Activated B cell treated with CpG ODN at 0.5 μM for 24 hours (primary cell): ENCODE measurements at regions of chr6 and their contacts with region 1.

Region 1: DNA sequence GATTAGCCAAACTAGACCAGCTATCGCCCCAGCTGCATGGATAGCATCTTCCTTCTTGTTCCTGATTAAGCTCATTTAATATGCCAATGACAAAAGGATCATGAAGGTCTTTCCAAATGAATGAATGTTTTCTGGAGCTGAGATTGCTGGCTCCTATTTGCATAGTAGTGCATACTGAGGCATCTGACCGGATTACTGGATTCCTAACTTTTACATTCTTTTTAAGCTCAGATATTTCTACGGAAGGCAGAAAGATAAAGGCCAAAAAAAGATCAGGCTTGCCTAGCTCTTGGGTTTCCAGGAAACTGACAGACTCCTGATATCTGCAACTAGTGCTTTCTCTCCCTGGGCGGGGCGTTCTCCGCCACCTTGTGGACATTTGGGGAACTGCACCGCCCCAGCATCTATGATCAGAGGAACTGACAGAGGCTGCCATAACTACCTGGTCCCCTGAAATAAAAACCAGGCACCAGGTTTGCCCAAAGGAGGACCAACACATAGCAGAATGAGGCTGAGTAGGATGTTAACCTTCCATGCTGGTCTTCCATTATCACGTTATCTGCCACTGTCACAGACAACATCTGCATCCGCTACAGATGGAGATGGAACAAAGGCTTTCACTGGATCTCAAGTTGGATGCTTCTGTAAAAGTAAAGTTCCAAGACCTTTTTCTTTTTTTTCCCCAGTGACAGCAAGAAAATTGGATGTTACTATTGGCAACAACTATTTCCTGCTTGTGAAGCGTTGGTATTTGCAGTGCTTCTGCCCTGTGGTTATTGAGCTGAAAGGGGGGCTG is 33.2 kb downstream of the NT5E start:
- DNase-seq: peak; percentile 76
- ATAC-seq: peak; percentile 88
- H3K4me3 Mint-ChIP-seq: no peak overlapping the region
- H3K27ac Mint-ChIP-seq: no peak overlapping the region
- H3K4me1 Mint-ChIP-seq: peaks cover 16% of the 10 kb centered on the region
- H3K27me3 Mint-ChIP-seq: no peaks in the 10 kb centered on the region
- CTCF ChIP-seq: peak; percentile 92

Region 2: DNA sequence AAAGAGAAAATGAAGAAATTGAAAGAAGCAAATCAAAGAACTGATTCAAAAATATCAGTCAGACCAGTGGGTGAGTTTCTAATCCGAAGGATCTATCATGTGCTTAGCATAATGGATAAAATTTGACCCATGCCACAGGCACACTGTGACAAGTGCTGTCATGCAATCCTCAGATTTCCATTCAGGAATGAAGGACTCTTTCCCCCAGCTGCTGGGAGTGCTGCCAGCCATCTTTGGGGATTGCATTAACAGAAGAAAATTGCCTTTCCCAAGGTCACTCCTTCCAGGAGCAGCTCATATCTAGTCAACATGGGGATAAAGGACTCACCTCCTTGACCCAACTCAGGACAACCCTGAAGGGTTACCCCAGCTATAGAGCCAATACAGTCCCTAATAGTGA is 402.0 kb before region 1 on chr6:
- CTCF ChIA-PET with region 1: no interaction called
- POLR2A ChIA-PET with region 1: no interaction called
- intact Hi-C with region 1: no loop called
- DNase-seq: no peak
- ATAC-seq: no peak
- H3K4me3 Mint-ChIP-seq: no peak overlapping the region
- H3K27ac Mint-ChIP-seq: no peak overlapping the region
- H3K4me1 Mint-ChIP-seq: no peaks in the 10 kb centered on the region
- H3K27me3 Mint-ChIP-seq: no peaks in the 10 kb centered on the region
- CTCF ChIP-seq: no peak

Region 3: DNA sequence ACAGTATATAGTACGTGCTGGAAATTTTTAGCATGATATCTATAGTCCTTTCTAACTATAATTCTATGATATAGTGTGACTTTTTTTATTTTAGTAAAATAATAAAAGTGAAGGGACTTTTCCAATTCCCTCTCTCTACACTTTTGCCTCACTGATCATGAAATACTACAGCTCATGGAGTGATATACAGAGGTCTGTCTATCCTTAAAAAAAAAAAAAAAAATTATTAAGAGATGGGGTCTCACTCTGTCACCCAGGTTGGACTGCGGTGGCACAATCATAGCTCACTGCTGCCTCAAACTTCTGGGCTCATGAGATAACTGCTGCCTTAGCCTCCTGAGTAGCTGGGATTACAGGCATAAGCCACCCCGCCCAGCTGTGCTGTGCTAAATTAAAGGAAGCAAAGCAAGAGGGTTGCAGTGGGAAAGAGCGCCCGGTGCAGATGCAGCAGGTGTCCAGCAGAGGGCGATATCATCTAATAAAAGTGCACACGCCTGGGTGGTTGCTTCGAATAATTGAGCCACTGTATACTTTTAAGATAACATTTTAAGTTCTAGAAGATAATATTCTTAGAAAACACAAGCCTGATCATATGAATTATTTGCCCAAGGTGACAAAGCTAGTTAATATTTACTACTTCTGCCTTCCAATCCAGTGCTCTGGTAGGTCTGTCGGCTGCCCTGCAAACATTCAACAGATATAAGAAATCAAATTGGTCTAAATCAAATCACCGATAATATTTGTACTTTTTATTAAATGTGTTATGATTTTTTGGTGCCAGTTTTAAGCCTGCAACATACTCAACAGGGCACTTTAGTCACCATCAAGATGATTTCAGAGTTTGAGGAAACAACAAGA is 128.1 kb before region 1 on chr6:
- CTCF ChIA-PET with region 1: interaction called, 122 read pairs
- POLR2A ChIA-PET with region 1: no interaction called
- intact Hi-C with region 1: loop called (anchors 1 kb)
- DNase-seq: peak; percentile 43
- ATAC-seq: peak; percentile 68
- H3K4me3 Mint-ChIP-seq: no peak overlapping the region
- H3K27ac Mint-ChIP-seq: no peak overlapping the region
- H3K4me1 Mint-ChIP-seq: no peaks in the 10 kb centered on the region
- H3K27me3 Mint-ChIP-seq: peaks cover 6% of the 10 kb centered on the region
- CTCF ChIP-seq: peak; percentile 92

Region 4: DNA sequence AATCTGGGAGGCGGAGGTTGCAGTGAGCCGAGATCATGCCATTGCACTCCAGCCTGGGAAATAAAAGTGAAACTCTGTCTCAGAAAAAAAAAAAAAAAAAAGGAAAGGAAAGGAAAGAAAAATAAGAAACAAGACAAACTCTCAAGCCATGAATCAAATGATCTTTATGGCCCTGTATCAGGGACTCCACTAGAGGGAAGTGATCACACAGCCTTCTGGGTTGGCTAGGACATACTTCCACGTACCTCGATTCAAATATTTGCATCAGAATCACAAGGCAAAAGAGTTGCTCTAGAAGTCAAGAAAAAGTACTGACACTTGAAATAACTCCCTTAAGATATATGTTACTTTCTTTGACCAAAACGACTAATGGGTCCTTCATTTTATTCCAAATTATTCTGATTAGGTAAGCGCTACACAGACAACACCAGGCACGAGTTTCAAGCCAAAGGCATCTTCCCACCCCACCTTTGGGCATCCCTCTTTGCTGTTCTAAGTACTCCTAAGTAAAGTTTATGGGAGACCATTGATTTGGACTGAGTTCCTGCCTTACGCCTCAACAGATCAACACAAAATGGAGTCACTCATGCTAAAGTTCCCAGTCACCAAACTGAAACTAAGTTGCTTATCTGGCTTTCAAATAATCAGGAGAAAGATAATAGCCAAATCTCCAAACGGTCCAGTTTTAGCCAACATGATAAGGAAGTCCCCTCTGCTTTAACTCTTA is 110.8 kb before region 1 on chr6:
- CTCF ChIA-PET with region 1: interaction called, 13 read pairs
- POLR2A ChIA-PET with region 1: no interaction called
- intact Hi-C with region 1: loop called (anchors 5 kb)
- DNase-seq: no peak
- ATAC-seq: no peak
- H3K4me3 Mint-ChIP-seq: no peak overlapping the region
- H3K27ac Mint-ChIP-seq: no peak overlapping the region
- H3K4me1 Mint-ChIP-seq: no peaks in the 10 kb centered on the region
- H3K27me3 Mint-ChIP-seq: no peaks in the 10 kb centered on the region
- CTCF ChIP-seq: no peak

Region 5: GRCh38 chr6:85449818-85450759 is 33.0 kb before region 1 on chr6 and contains the start of gene NT5E:
- CTCF ChIA-PET with region 1: interaction called, 47 read pairs
- POLR2A ChIA-PET with region 1: interaction called, 9 read pairs
- intact Hi-C with region 1: loop called (anchors 1 kb)
- DNase-seq: peak; percentile 67
- ATAC-seq: peak; percentile 77
- H3K4me3 Mint-ChIP-seq: peak within 1 kb of the TSS; percentile 97
- H3K27ac Mint-ChIP-seq: peak within 1 kb of the TSS; percentile 94
- H3K4me1 Mint-ChIP-seq: peaks cover 68% of the 10 kb centered on the region
- H3K27me3 Mint-ChIP-seq: peaks cover 10% of the 10 kb centered on the region
- CTCF ChIP-seq: no peak
- total RNA-seq, gene NT5E: 5.8 and 6.6 TPM in 2 replicates

Region 6: DNA sequence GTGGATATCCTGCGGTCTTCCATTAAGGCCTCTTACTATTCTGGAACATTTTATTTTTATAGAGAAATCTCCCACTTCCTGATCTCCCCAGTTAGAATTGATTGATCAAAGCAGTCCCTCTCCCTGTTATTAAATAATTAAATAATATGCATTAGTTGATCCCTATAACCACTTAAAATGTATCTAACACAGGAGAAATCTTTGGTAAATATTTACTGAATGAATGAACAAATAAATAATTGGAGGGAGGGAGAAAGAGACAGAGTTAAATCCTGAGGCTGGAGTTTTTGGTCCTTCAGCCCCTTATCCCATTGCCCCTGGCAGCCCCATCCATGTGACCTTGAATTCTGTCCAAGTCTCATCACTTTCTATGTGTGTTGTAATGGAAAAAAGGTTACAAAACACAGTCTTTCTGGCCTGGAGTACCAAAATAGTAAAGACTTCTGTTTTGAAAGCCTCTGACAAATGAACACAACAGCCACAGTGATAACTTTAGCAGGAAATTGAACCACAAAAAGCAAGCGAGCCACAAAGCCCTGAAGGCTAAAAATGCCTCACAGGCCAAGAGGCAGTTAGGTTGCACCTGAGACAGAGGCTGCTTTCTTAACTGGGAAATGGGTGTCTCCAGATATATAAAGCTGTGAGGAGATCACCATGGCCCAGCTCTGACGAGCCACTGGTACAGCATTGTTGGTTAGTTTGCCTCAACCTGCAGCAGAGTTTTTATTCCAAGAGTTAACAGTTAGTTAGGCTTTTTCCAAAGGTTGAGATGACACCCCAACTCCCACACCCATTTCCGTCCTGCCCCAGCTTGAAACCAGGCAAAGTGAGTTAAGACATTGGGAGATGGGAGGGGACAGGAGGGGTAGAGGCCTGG is 21.9 kb before region 1 on chr6:
- CTCF ChIA-PET with region 1: interaction called, 23 read pairs
- POLR2A ChIA-PET with region 1: interaction called, 3 read pairs
- intact Hi-C with region 1: no loop called
- DNase-seq: no peak
- ATAC-seq: peak; percentile 47
- H3K4me3 Mint-ChIP-seq: peak overlapping the region; percentile 12
- H3K27ac Mint-ChIP-seq: peak overlapping the region; percentile 62
- H3K4me1 Mint-ChIP-seq: peaks cover 93% of the 10 kb centered on the region
- H3K27me3 Mint-ChIP-seq: no peaks in the 10 kb centered on the region
- CTCF ChIP-seq: no peak

Region 7: DNA sequence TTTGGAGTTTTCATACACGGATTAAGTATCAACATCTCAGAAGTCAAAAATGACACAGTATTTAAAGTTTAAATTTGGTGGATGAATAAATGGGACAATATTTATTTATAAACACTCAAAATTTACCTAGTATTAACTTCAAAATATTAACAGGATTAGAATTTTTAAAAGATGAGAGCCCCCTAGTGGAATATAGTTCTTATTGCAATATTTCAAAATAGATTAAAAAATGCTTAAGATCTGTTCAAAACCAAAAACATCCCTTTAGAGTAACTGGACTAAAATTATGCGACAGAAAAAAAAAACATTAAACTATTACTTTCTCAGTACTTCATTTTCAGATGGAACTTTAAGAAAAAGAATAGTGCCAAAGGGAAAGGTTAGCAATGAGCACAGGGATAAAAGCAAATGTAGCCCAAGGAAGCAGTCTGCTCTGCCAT is 54.0 kb after region 1 on chr6:
- CTCF ChIA-PET with region 1: interaction called, 17 read pairs
- POLR2A ChIA-PET with region 1: no interaction called
- intact Hi-C with region 1: loop called (anchors 5 kb)
- DNase-seq: no peak
- ATAC-seq: no peak
- H3K4me3 Mint-ChIP-seq: no peak overlapping the region
- H3K27ac Mint-ChIP-seq: no peak overlapping the region
- H3K4me1 Mint-ChIP-seq: no peaks in the 10 kb centered on the region
- H3K27me3 Mint-ChIP-seq: no peaks in the 10 kb centered on the region
- CTCF ChIP-seq: peak; percentile 94

Region 8: DNA sequence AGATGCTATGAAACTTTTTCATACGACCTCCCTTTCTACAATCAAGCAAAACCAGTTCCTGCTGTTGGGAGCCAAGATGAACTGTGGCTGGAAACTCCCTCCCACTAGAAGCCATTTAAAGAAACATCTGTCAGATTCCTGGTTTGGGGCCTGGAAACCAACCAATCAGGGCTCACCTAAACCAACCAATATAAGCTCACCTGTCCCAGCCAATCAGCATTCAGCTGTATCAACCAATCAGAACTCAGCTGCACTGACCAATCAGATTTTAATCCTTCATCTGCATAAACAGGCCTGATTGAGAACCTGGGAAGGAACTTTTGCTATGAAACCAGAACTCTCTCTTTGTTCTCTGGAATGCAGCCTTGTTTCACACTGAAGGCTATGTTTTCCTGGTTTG is 68.2 kb after region 1 on chr6:
- CTCF ChIA-PET with region 1: no interaction called
- POLR2A ChIA-PET with region 1: no interaction called
- intact Hi-C with region 1: no loop called
- DNase-seq: no peak
- ATAC-seq: no peak
- H3K4me3 Mint-ChIP-seq: no peak overlapping the region
- H3K27ac Mint-ChIP-seq: no peak overlapping the region
- H3K4me1 Mint-ChIP-seq: no peaks in the 10 kb centered on the region
- H3K27me3 Mint-ChIP-seq: no peaks in the 10 kb centered on the region
- CTCF ChIP-seq: no peak

Region 9: GRCh38 chr6:85561750-85562357 is 78.8 kb after region 1 on chr6:
- CTCF ChIA-PET with region 1: no interaction called
- POLR2A ChIA-PET with region 1: no interaction called
- intact Hi-C with region 1: no loop called
- DNase-seq: no peak
- ATAC-seq: no peak
- H3K4me3 Mint-ChIP-seq: no peak overlapping the region
- H3K27ac Mint-ChIP-seq: no peak overlapping the region
- H3K4me1 Mint-ChIP-seq: no peaks in the 10 kb centered on the region
- H3K27me3 Mint-ChIP-seq: no peaks in the 10 kb centered on the region
- CTCF ChIP-seq: no peak